ENCODE measurements at regions of chr6 and their contacts with region 1.

Region 1: GRCh38 chr6:32255199-32256153 is 31.6 kb upstream of the NOTCH4 start:
- DNase-seq: peak; percentile 73 to 76
- H3K4me3 ChIP-seq: no peak overlapping the region
- H3K27ac ChIP-seq: no peak overlapping the region
- H3K4me1 ChIP-seq: peaks cover 5% of the 10 kb centered on the region; the same call in 1 of the 2 replicates
- H3K27me3 ChIP-seq: peaks cover 33% of the 10 kb centered on the region
- CTCF ChIP-seq: peak; percentile 55

Region 2: GRCh38 chr6:31842056-31842455 is 413.4 kb before region 1 on chr6:
- CTCF ChIA-PET with region 1: no interaction called
- POLR2A ChIA-PET with region 1: no interaction called
- intact Hi-C with region 1: no loop called
- DNase-seq: no peak
- H3K4me3 ChIP-seq: no peak overlapping the region
- H3K27ac ChIP-seq: no peak overlapping the region
- H3K4me1 ChIP-seq: peaks cover 14% of the 10 kb centered on the region
- H3K27me3 ChIP-seq: no peaks in the 10 kb centered on the region
- CTCF ChIP-seq: no peak

Region 3: GRCh38 chr6:32317541-32317940 is 62.1 kb after region 1 on chr6:
- CTCF ChIA-PET with region 1: no interaction called
- POLR2A ChIA-PET with region 1: no interaction called
- intact Hi-C with region 1: no loop called
- DNase-seq: no peak
- H3K4me3 ChIP-seq: no peak overlapping the region
- H3K27ac ChIP-seq: no peak overlapping the region
- H3K4me1 ChIP-seq: no peaks in the 10 kb centered on the region
- H3K27me3 ChIP-seq: peaks cover 57% of the 10 kb centered on the region
- CTCF ChIP-seq: no peak

Region 4: GRCh38 chr6:32393665-32394420 is 138.4 kb after region 1 on chr6:
- CTCF ChIA-PET with region 1: no interaction called
- POLR2A ChIA-PET with region 1: no interaction called
- intact Hi-C with region 1: loop called (anchors 10 kb)
- DNase-seq: no peak
- H3K4me3 ChIP-seq: no peak overlapping the region
- H3K27ac ChIP-seq: no peak overlapping the region
- H3K4me1 ChIP-seq: no peaks in the 10 kb centered on the region
- H3K27me3 ChIP-seq: peaks cover 33% of the 10 kb centered on the region
- CTCF ChIP-seq: no peak

Region 5: GRCh38 chr6:32558426-32559057 is 303.1 kb after region 1 on chr6:
- CTCF ChIA-PET with region 1: no interaction called
- POLR2A ChIA-PET with region 1: no interaction called
- intact Hi-C with region 1: no loop called
- DNase-seq: no peak
- H3K4me3 ChIP-seq: no peak overlapping the region
- H3K27ac ChIP-seq: no peak overlapping the region
- H3K4me1 ChIP-seq: no peaks in the 10 kb centered on the region
- H3K27me3 ChIP-seq: peaks cover 25% of the 10 kb centered on the region
- CTCF ChIP-seq: no peak

Region 6: DNA sequence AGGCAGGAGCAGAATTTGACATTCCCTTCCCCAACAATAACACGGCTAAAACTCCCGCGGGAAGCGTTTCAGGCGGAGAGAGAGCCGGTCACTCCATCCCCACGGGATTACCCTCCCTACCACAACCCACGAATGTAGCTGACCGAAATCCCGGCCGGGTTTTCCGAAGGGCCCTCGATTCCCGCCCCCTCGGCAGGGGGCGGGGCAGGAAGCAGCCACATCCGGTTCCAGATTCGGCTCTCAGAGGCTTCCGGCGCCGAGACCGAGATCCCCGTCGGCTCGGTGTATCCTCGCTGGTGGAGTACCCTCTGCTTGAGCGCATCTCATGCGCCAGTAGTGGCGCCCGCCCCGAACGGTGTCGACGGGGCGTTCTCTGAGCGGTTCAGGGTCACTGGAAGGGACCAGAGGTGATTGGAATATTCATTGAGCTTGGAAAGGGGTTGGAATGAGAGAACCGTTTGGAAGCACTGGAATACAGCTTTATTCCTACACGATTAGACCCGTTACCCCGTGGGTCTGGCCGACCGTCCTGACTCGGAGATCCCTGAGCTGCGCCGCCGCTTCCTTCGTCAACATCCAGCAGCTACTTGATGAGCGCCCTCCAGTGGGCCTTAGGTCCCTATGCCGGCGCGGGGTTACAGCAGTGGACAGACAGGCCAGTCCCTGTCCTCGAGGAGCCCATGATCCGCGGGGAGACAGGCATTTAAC is 1043.9 kb after region 1 on chr6:
- CTCF ChIA-PET with region 1: no interaction called
- POLR2A ChIA-PET with region 1: no interaction called
- intact Hi-C with region 1: no loop called
- DNase-seq: peak; percentile 72 to 87
- H3K4me3 ChIP-seq: peak overlapping the region; percentile 75
- H3K27ac ChIP-seq: peak overlapping the region; percentile 88
- H3K4me1 ChIP-seq: peaks cover 23% of the 10 kb centered on the region
- H3K27me3 ChIP-seq: no peaks in the 10 kb centered on the region
- CTCF ChIP-seq: peak; percentile 78

Measured in PC-9 (cell line).